ENCODE measurements at regions of chr7 and their contacts with region 1.

Region 1: DNA sequence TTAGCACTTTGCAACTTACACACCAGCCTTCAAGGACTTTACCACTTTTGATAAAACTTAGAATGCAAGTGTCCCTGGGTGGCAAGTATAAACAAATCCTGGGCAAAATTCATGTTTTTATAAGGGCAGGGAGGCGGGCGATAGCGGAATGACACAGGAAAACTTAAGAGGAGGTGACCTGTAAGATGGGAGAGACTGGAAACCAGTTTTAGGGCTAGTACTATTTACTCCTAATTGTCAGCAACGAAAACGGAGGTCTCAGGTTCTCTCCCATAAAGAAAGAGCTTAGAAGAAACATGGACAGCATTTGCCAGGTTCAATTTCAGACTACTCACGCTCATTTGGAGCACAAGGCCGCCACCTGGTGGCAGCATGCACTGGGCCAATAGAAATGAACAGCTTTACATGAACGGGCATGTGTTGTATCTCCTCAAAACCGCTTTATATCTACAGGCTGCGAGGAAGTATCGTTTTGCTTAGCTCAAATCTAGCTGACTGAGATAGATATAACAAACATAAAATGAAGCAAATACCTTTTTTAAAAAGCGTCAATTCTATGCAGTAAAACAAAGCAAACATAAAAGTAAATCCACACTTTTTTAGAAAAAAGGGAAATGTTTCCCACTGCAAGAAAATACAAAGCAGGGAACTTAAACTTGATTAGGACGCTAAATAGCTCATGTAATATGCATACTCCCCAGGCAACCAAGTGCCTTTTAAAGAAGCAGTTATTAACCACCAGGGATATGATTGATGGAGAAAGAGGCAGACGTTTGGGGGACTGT is 37.6 kb upstream of the SVOPL start:
- DNase-seq: peak; percentile 42 to 97 (median 90)
- H3K4me3 ChIP-seq: peak overlapping the region in 1 of 59 donors; percentile 10
- H3K27ac ChIP-seq: no peak overlapping the region
- H3K27me3 ChIP-seq: no peaks in the 10 kb centered on the region
- CTCF ChIP-seq: peak; percentile 79 to 99 (median 95)

Region 2: GRCh38 chr7:138161600-138162081 is 577.1 kb before region 1 on chr7:
- intact Hi-C with region 1: loop called (anchors 1 to 2 kb)
- DNase-seq: peak; percentile 42 to 89 (median 82)
- H3K4me3 ChIP-seq: peak overlapping the region in 17 of 59 donors; percentile 2 to 45 (median 21)
- H3K27ac ChIP-seq: peak overlapping the region in 29 of 59 donors; percentile 1 to 61 (median 36)
- H3K27me3 ChIP-seq: peaks cover 0 to under 1% (median 0%) of the 10 kb centered on the region in 45 donors
- CTCF ChIP-seq: peak; percentile 27 to 87 (median 68)

Region 3: DNA sequence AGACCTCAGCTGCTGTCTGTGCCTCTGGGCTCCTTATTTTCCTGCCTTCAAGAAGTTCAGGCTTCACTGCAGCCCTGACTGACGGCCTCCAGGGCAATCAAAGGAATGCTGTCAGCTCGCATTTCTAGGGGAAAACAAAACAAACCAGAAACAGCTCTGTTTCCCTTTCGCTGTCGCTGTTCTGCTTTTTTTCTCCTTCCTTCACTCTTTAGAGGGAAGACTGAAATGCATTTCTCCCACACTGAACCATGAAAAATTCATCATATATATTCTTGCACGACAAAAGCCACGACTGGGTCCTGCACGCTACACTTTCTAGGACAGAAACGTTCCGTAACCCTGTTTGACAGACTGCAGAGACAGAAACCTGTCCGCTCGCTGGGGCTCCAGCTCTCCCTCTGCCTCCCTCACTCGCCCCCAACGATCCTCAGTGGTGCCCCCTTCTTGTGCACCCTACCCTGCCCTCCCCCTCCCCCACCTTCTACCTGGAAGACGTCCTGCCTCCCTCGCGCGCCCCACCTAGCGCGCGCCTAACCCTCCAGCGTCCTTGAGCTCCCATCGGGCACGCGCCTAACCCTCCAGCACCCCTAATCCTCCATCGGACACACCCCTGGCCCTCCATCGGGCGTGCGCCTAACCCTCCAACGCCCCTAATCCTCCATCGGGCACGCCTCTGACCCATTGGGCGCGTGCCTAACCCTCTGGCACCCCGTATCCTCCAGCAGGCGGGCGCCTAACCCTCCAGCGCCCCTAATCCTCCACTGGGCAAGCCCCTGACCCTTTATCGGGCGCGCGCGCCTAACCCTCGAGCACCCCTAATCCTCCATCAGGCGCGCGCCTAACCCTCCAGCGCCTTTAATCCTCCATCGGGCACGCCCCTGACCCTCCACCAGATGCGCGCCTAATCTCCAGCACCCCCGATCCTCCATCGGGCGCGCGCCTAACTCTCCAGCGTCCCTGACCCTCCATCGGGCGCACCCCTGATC is 74.7 kb before region 1 on chr7:
- intact Hi-C with region 1: loop called in 1 of 2 experiments (anchors 5 kb)
- DNase-seq: peak in 2 of 10 donors; percentile 14 to 45
- H3K4me3 ChIP-seq: peak overlapping the region; percentile 29 to 84 (median 62)
- H3K27ac ChIP-seq: peak overlapping the region in 47 of 59 donors; percentile 16 to 90 (median 65)
- H3K27me3 ChIP-seq: no peaks in the 10 kb centered on the region
- CTCF ChIP-seq: peak in 1 of 56 donors; percentile 11